AG04449 (cell line): ENCODE measurements at regions of chr7 and their contacts with region 1.

Region 1: GRCh38 chr7:77759294-77759889 is 38.8 kb downstream of the TMEM60 start:
- DNase-seq: no peak
- H3K4me3 ChIP-seq: no peak overlapping the region
- CTCF ChIP-seq: peak; percentile 60

Region 2: DNA sequence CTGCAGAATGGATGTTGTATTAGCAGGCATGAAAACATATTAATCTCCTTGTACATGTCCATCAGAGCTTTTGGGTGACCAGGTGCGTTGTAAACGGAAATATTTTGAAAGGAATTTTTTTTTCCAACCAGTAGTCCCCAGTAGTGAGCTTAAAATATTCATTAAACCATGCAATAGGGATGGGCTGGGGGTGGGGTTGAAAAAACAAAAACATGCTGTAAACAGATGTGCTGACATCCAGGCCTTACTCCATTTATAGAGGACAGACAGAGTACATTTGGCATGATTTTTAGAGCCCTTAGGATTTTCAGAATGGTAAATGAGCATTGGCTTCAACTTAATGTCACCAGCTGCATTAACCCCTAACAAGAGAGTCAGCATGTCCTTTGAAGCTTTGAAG is 172.1 kb before region 1 on chr7:
- CTCF ChIA-PET with region 1: no interaction called
- POLR2A ChIA-PET with region 1: no interaction called
- DNase-seq: no peak
- H3K4me3 ChIP-seq: no peak overlapping the region
- CTCF ChIP-seq: no peak

Region 3: DNA sequence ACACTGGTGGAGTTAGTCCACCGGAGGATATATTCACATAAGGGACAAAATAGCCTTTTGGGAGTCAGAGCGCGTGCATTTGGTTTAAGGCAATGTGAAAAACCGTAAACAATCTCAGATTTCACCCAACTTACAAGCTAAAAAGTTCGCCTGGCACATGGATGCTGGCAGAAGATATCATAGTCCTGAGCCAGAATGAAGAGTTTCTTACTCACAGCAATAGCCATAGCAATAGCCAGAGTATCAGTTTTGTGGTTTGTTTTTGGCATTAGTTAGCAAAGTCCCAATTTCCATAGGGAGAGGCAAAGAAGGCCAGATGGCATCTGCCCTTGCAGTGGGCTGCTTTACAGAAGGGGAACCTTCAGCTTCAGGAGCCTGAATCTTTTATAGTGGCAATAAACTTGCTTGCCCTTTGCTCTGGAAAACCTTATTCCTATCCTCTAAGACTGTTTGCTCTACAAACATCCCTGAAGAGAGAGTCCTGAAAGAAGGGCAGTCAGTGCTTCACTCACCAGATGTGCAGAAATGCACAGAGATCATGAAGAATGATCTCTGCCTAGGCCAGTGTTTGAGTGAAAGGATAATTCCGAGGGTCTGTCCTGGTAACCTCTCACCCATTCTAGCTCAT is 91.8 kb before region 1 on chr7:
- CTCF ChIA-PET with region 1: interaction called, 15 read pairs
- POLR2A ChIA-PET with region 1: no interaction called
- DNase-seq: no peak
- H3K4me3 ChIP-seq: no peak overlapping the region
- CTCF ChIP-seq: no peak

Region 4: GRCh38 chr7:77702513-77702912 is 56.9 kb before region 1 on chr7:
- CTCF ChIA-PET with region 1: interaction called, 13 read pairs
- POLR2A ChIA-PET with region 1: no interaction called
- DNase-seq: no peak
- H3K4me3 ChIP-seq: no peak overlapping the region
- CTCF ChIP-seq: no peak

Region 5: DNA sequence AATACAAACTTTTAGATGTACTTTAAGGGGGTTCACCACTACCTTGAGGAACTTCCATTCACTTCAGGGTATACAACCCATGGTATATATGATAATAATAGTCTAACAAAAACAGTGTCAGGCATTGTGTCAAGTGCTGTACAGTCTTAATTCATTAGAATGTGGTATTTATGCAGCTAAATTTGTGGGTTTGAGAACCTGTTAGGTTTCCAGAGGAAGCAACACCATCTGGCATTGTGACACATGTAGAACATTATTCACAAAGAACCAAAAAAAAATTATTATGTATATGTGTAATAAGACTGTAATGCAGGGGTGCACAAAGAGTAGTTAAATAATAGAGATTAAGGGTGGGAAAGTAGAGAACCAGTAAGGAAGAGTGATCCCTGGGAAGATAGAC is 12.5 kb after region 1 on chr7:
- CTCF ChIA-PET with region 1: interaction called, 17 read pairs
- POLR2A ChIA-PET with region 1: no interaction called
- DNase-seq: no peak
- H3K4me3 ChIP-seq: no peak overlapping the region
- CTCF ChIP-seq: no peak

Region 6: DNA sequence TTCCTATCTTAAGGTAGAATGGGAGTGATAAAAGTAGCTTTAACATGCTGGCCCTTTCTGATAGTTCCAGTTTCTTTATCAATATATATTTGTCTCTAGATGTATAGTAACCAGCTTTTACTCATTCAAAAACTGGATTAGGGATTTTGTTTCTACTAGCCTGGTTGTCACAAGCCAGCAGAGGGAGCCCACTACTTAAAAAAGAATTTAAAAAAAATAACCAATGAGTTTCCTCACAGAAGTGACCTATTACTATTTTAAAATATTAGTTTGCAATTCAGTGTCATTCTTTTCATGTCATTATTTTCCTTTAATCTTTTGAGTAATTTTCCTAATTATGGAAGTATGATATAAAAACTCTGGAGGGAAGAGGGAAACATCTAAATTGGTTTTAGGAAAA is 181.3 kb after region 1 on chr7:
- CTCF ChIA-PET with region 1: interaction called, 18 read pairs
- POLR2A ChIA-PET with region 1: no interaction called
- DNase-seq: no peak
- H3K4me3 ChIP-seq: no peak overlapping the region
- CTCF ChIP-seq: peak; percentile 29